ENCODE measurements at regions of chr20 and their contacts with region 1.

Region 1: DNA sequence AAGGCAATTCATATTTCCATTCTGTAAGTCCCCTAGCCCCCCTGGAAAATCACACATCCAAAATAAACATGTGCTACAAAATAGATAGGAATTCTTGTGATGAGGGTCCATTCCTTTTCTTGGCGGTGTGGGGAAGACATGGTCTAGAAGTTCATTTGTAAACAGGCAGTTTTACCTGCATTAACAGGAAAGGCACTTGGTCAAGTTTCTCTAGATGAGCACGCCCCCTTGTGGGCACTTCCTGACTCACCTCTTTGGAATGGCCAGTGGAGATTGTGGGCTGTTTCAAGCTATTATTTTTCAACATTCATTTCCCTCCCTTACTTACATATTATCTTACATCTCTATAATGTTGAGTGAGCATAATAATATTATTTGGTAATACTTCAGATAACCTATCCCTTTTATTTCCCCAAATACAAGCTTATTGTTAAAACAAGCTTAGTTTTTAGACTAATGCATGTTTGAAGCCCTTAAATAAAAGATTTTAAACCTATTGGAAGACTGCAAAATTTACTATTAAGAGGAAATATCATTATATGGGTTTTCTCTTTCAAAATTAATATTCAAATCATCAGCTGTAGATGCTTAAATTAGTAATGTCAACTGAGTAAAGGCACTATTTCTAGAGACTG is 92.1 kb downstream of the TASP1 start:
- DNase-seq: peak; percentile 85
- ATAC-seq: no peak
- H3K4me3 Mint-ChIP-seq: no peak overlapping the region
- H3K27ac Mint-ChIP-seq: no peak overlapping the region
- H3K4me1 Mint-ChIP-seq: no peaks in the 10 kb centered on the region
- H3K27me3 Mint-ChIP-seq: no peaks in the 10 kb centered on the region

Region 2: DNA sequence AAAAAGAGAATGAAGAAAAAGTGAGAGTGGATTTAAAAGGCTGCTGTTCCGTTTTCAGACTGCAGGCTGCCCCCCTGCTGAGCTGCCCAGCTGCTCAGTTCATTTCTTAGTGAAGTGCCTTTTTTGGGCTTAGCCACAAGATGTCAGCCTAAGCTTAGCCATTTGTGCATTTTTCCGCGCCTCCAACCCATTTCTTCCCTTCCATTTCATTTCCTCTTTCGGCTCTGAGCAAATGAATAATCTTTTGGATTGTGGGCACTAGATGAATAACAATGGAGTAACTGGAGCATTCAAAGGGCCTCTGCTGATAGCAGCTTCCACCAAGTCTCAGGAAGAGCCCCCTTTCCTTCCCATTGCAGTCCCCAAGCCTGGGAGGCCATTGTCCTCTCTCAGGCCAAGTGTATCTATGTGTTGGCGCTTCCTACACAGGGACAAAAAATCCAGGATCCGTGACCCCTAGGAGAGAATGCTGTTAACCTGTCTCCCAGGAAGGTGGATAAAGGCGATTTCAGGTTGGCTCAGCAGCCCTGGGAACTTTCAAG is 621.3 kb before region 1 on chr20:
- CTCF ChIA-PET with region 1: interaction called, 3 read pairs
- POLR2A ChIA-PET with region 1: no interaction called
- intact Hi-C with region 1: loop called in 1 of 2 experiments (anchors 2 kb)
- DNase-seq: peak; percentile 65
- ATAC-seq: peak; percentile 79
- H3K4me3 Mint-ChIP-seq: no peak overlapping the region
- H3K27ac Mint-ChIP-seq: no peak overlapping the region
- H3K4me1 Mint-ChIP-seq: peaks cover 11% of the 10 kb centered on the region
- H3K27me3 Mint-ChIP-seq: no peaks in the 10 kb centered on the region

Region 3: GRCh38 chr20:12970372-12970821 is 576.2 kb before region 1 on chr20:
- CTCF ChIA-PET with region 1: no interaction called
- POLR2A ChIA-PET with region 1: no interaction called
- intact Hi-C with region 1: loop called in 1 of 2 experiments (anchors 5 kb)
- DNase-seq: peak; percentile 29
- ATAC-seq: no peak
- H3K4me3 Mint-ChIP-seq: no peak overlapping the region
- H3K27ac Mint-ChIP-seq: no peak overlapping the region
- H3K4me1 Mint-ChIP-seq: peaks cover 17% of the 10 kb centered on the region
- H3K27me3 Mint-ChIP-seq: no peaks in the 10 kb centered on the region

Region 4: DNA sequence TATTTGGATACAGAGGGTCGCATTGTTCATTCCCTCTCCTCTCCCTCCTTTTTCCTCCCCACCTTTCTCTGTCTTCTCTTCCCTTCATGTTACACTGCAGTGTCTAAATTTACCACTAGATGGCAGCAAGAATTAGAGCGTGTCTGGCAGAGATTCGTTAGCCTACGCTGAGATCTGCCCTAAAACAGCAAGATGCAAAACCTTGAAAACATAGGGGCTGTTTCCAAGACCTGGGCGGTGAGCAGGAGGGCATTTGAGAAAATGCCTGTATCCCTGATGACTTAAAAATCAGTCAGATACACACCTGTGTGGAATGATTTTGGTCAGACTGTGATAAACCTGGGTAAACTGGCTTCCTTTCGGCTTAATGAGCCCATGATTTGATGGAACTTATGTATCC is 427.0 kb before region 1 on chr20:
- CTCF ChIA-PET with region 1: interaction called, 37 read pairs
- POLR2A ChIA-PET with region 1: no interaction called
- intact Hi-C with region 1: loop called (anchors 1 kb)
- DNase-seq: peak; percentile 30
- ATAC-seq: peak; percentile 71
- H3K4me3 Mint-ChIP-seq: no peak overlapping the region
- H3K27ac Mint-ChIP-seq: no peak overlapping the region
- H3K4me1 Mint-ChIP-seq: no peaks in the 10 kb centered on the region
- H3K27me3 Mint-ChIP-seq: no peaks in the 10 kb centered on the region

Region 5: DNA sequence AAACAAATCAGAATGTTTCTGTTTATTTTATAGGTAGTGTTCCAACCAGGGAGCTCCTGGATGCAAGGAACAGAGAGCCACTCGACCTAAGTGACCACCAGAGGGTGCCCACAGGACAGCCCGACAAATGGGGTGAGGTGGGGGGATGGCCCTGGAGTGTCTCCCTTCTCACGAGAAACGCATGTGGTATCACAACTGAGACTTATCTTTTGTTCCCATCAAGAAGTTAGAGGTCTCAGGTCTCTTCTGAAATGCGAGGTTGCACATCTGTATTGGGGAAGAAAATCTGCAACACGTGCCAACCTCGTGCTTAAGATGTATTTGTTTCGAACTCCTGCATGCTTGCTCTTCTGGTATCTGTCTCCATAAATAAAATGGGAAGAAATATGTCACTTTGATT is 221.6 kb before region 1 on chr20:
- CTCF ChIA-PET with region 1: interaction called, 10 read pairs
- POLR2A ChIA-PET with region 1: no interaction called
- intact Hi-C with region 1: loop called in 1 of 2 experiments (anchors 2 kb)
- DNase-seq: peak; percentile 36
- ATAC-seq: no peak
- H3K4me3 Mint-ChIP-seq: no peak overlapping the region
- H3K27ac Mint-ChIP-seq: no peak overlapping the region
- H3K4me1 Mint-ChIP-seq: peaks cover 4% of the 10 kb centered on the region
- H3K27me3 Mint-ChIP-seq: peaks cover 17% of the 10 kb centered on the region

Region 6: GRCh38 chr20:13336308-13337089 is 210.1 kb before region 1 on chr20:
- CTCF ChIA-PET with region 1: no interaction called
- POLR2A ChIA-PET with region 1: no interaction called
- intact Hi-C with region 1: no loop called
- DNase-seq: peak; percentile 48
- ATAC-seq: peak; percentile 85
- H3K4me3 Mint-ChIP-seq: no peak overlapping the region
- H3K27ac Mint-ChIP-seq: no peak overlapping the region
- H3K4me1 Mint-ChIP-seq: peaks cover 20% of the 10 kb centered on the region
- H3K27me3 Mint-ChIP-seq: peaks cover 2% of the 10 kb centered on the region

Region 7: DNA sequence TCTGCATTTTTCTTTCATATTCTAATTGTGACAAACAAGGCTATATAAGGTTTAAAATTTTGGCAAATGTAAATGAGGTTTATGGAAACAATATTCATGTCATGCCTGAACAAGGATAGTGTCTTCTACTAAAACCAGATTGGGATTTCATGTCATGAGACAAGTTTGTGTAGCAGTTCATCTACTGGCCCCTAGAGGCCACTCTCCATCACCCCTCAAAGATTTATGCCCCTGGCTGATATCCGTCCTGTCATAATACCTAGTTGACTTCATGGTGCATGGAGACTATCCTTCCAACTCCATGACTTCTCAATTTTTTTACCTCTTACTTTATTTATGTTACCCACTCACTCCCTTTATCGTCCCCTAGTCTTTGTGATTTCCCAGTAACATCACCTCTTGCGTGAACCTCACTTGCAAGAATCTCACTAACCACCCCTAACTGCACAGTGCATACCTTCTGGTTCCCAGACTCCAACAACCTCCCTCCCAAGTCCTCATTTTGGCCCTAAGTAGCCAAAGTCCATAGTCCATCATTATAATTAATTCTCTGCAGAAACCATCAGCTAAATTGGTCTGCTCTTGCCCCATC is 87.7 kb before region 1 on chr20:
- CTCF ChIA-PET with region 1: interaction called, 10 read pairs
- POLR2A ChIA-PET with region 1: no interaction called
- intact Hi-C with region 1: loop called (anchors 1 to 2 kb)
- DNase-seq: peak; percentile 22
- ATAC-seq: peak; percentile 63
- H3K4me3 Mint-ChIP-seq: no peak overlapping the region
- H3K27ac Mint-ChIP-seq: no peak overlapping the region
- H3K4me1 Mint-ChIP-seq: no peaks in the 10 kb centered on the region
- H3K27me3 Mint-ChIP-seq: no peaks in the 10 kb centered on the region

Region 8: GRCh38 chr20:13533946-13534345 is 12.7 kb before region 1 on chr20:
- CTCF ChIA-PET with region 1: interaction called, 22 read pairs
- POLR2A ChIA-PET with region 1: no interaction called
- intact Hi-C with region 1: no loop called
- DNase-seq: no peak
- ATAC-seq: no peak
- H3K4me3 Mint-ChIP-seq: no peak overlapping the region
- H3K27ac Mint-ChIP-seq: no peak overlapping the region
- H3K4me1 Mint-ChIP-seq: no peaks in the 10 kb centered on the region
- H3K27me3 Mint-ChIP-seq: no peaks in the 10 kb centered on the region

Measured in activated CD4-positive, alpha-beta T cell treated with anti-CD3 and anti-CD28 coated beads for 36 hours (primary cell).